Endothelial cell of umbilical vein (primary cell): ENCODE measurements at regions of chr17 and their contacts with region 1.

Region 1: DNA sequence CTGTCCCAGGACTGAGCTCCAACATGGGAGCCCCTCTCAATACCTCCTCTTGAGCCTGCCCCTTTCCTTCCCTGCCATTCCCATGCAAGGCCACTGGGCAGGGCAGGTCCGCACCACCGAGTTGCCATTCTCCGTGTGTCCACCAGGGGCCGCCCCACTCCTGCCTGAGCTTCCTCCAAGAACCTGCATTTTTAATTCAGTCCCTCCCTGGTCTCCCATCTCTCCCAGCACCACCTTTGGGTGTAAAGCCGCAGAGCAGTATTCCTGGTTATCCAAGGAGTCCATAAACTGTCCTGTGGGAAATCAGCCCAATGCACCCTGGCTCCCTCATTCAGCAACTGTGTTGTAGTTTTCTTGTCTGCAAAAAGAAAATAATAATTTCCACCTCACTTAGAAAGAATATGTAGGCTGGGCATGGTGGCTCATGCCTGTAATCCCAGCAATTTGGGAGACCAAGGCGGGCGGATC is 15.9 kb upstream of the ANKRD40CL start:
- DNase-seq: peak; percentile 87
- H3K4me3 ChIP-seq: no peak overlapping the region
- H3K27ac ChIP-seq: no peak overlapping the region
- H3K4me1 ChIP-seq: peaks cover 5% of the 10 kb centered on the region
- H3K27me3 ChIP-seq: peaks cover 0 to 2% of the 10 kb centered on the region in 2 experiments
- CTCF ChIP-seq: peak; percentile 97 to 99
- POLR2A ChIP-seq: no peak

Region 2: DNA sequence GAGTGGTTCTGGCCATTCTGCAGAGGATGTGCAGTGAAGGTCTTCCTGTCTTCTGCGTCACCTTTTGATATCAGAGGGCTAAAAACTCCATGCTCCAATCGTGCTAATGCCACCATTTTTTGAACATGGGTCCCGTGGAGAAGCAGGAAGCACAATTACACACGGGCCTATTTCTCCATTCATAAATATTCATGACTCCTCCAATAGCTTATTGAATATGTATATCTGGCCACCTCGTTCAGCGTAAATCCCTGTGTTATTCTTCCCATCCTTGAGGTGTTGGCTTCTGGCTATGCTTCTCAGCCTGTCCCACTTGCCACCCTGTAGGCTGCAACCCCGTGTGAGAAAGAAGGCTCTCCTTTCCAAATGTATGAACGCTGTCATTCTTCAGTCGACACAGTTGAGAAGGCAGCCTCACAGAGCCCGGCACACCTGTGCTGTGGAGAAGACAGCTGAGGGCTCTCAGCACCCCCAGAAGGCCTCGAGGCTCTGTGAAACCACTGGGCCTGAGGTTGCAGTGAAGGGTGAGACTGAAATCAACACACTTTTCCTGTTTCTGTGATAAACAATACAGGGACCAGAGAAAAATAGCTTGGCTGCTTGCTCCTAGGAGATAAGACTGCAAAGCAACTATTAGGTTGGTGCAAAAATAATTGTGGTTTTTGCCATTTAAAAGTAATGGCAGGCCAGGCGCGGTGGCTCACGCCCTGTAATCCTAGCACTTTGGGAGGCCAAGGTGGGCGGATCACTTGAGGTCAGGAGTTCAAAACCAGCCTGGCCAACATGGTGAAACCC is 11.0 kb before region 1 on chr17:
- CTCF ChIA-PET with region 1: interaction called, 14 read pairs
- POLR2A ChIA-PET with region 1: no interaction called
- dilution Hi-C with region 1: no loop called
- intact Hi-C with region 1: no loop called
- DNase-seq: no peak
- H3K4me3 ChIP-seq: no peak overlapping the region
- H3K27ac ChIP-seq: no peak overlapping the region
- H3K4me1 ChIP-seq: no peaks in the 10 kb centered on the region
- H3K27me3 ChIP-seq: no peaks in the 10 kb centered on the region
- CTCF ChIP-seq: no peak
- POLR2A ChIP-seq: no peak

Region 3: GRCh38 chr17:50806141-50806643 is 23.0 kb after region 1 on chr17:
- CTCF ChIA-PET with region 1: interaction called, 42 read pairs
- POLR2A ChIA-PET with region 1: no interaction called
- dilution Hi-C with region 1: no loop called
- intact Hi-C with region 1: no loop called
- DNase-seq: no peak
- H3K4me3 ChIP-seq: no peak overlapping the region
- H3K27ac ChIP-seq: no peak overlapping the region
- H3K4me1 ChIP-seq: no peaks in the 10 kb centered on the region
- H3K27me3 ChIP-seq: peaks cover 0 to 2% of the 10 kb centered on the region in 2 experiments
- CTCF ChIP-seq: no peak
- POLR2A ChIP-seq: no peak

Region 4: GRCh38 chr17:50828508-50829170 is 45.4 kb after region 1 on chr17:
- CTCF ChIA-PET with region 1: interaction called, 12 read pairs
- POLR2A ChIA-PET with region 1: no interaction called
- dilution Hi-C with region 1: no loop called
- intact Hi-C with region 1: no loop called
- DNase-seq: no peak
- H3K4me3 ChIP-seq: no peak overlapping the region
- H3K27ac ChIP-seq: no peak overlapping the region
- H3K4me1 ChIP-seq: no peaks in the 10 kb centered on the region
- H3K27me3 ChIP-seq: peaks cover 2 to 3% of the 10 kb centered on the region in 2 experiments
- CTCF ChIP-seq: no peak
- POLR2A ChIP-seq: no peak

Region 5: GRCh38 chr17:50853015-50853615 is 69.9 kb after region 1 on chr17:
- CTCF ChIA-PET with region 1: interaction called, 25 read pairs
- POLR2A ChIA-PET with region 1: no interaction called
- dilution Hi-C with region 1: no loop called
- intact Hi-C with region 1: no loop called
- DNase-seq: peak; percentile 53
- H3K4me3 ChIP-seq: no peak overlapping the region
- H3K27ac ChIP-seq: no peak overlapping the region
- H3K4me1 ChIP-seq: peaks cover 10% of the 10 kb centered on the region
- H3K27me3 ChIP-seq: peaks cover 7 to 16% of the 10 kb centered on the region in 2 experiments
- CTCF ChIP-seq: no peak
- POLR2A ChIP-seq: no peak

Region 6: GRCh38 chr17:50935201-50935995 is 152.2 kb after region 1 on chr17:
- CTCF ChIA-PET with region 1: no interaction called
- POLR2A ChIA-PET with region 1: no interaction called
- dilution Hi-C with region 1: no loop called
- intact Hi-C with region 1: no loop called
- DNase-seq: no peak
- H3K4me3 ChIP-seq: no peak overlapping the region
- H3K27ac ChIP-seq: no peak overlapping the region
- H3K4me1 ChIP-seq: peaks cover 11% of the 10 kb centered on the region
- H3K27me3 ChIP-seq: no peaks in the 10 kb centered on the region
- CTCF ChIP-seq: no peak
- POLR2A ChIP-seq: no peak

Region 7: DNA sequence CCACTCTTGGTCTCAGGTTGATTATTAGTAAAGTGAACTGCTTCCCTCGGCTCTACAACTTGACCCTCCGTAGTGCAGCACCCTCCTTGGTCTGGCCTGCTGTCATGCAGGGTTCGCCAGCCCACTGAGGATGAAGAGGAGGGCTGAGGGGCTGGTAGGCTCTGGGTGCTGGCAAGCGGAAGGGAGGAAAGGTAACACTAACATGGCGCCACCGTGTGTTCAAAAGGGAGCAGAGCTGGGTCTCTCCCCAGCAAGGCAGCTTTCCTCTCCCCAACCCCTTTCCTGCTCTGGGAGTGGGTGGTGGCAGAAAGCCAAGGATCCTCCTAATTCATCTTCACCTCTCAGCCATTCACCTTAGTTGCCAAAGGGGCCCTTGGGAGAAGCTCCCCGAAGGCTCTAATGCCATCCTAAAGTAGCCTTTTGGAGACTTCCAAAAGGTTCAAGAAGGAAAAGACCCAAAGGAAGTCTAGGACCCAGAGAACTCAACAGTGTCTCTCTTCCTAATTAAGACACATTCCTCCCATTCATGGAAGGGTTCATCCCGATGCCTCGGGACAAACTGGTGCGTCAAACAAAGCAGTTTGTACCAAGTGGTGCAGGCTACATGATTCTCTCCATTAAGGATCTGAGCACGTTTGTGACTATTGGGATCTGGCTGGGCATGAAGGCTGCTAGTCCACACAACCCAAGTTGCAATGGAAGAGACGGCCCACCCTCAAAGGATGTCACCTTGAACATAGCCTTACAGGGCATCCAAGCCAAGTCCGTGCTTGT is 173.7 kb after region 1 on chr17:
- CTCF ChIA-PET with region 1: interaction called, 26 read pairs
- POLR2A ChIA-PET with region 1: no interaction called
- dilution Hi-C with region 1: no loop called
- intact Hi-C with region 1: loop called (anchors 1 kb)
- DNase-seq: peak; percentile 44
- H3K4me3 ChIP-seq: no peak overlapping the region
- H3K27ac ChIP-seq: no peak overlapping the region
- H3K4me1 ChIP-seq: peaks cover 7% of the 10 kb centered on the region
- H3K27me3 ChIP-seq: no peaks in the 10 kb centered on the region
- CTCF ChIP-seq: peak; percentile 76 to 87
- POLR2A ChIP-seq: no peak